Tibial artery (tissue), 4 donors: ENCODE measurements at regions of chr4 and their contacts with region 1.

Region 1: DNA sequence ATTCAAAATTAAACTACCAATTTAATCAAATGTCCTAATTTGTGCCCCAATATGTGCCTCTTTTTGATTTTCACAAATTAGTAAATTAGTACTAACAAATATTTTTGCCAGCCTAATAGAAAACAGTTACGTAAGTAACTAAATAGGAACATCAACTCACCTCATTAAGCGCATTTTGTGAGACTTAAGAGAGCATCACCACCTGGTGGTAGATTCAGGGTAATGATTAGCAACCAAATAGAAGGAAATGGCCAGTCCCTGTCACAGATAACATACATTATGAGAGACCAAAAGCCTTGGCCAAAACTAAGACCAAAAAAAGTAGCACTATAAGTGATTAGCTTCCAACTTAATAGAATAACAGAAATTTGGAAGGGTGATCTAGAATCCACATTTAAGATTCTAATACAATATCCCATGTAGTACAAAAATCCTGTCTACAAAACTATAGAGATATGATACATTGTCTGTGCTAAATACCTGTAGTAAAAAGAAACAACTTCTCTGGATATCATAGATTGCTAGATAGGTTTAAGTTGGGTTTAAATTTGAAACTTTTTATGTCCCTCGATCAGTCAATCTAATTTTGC is 46.7 kb downstream of the C4orf46 start:
- DNase-seq: no peak
- H3K4me3 ChIP-seq: no peak overlapping the region
- H3K27ac ChIP-seq: peak overlapping the region in 1 of 2 donors; percentile 18
- H3K4me1 ChIP-seq: peaks cover 0 to 16% (median 0%) of the 10 kb centered on the region in 4 donors
- H3K27me3 ChIP-seq: no peaks in the 10 kb centered on the region
- CTCF ChIP-seq: peak; percentile 69 to 87

Region 2: GRCh38 chr4:158253350-158253980 is 371.5 kb before region 1 on chr4:
- intact Hi-C with region 1: loop called (anchors 5 kb)
- DNase-seq: peak in 1 of 2 donors; percentile 42
- H3K4me3 ChIP-seq: no peak overlapping the region
- H3K27ac ChIP-seq: peak overlapping the region in 1 of 2 donors; percentile 53
- H3K4me1 ChIP-seq: peaks cover 0 to 26% (median 2%) of the 10 kb centered on the region in 4 donors
- H3K27me3 ChIP-seq: no peaks in the 10 kb centered on the region
- CTCF ChIP-seq: peak; percentile 64 to 69